H1 (cell line): ENCODE measurements at regions of chr19 and their contacts with region 1.

Region 1: DNA sequence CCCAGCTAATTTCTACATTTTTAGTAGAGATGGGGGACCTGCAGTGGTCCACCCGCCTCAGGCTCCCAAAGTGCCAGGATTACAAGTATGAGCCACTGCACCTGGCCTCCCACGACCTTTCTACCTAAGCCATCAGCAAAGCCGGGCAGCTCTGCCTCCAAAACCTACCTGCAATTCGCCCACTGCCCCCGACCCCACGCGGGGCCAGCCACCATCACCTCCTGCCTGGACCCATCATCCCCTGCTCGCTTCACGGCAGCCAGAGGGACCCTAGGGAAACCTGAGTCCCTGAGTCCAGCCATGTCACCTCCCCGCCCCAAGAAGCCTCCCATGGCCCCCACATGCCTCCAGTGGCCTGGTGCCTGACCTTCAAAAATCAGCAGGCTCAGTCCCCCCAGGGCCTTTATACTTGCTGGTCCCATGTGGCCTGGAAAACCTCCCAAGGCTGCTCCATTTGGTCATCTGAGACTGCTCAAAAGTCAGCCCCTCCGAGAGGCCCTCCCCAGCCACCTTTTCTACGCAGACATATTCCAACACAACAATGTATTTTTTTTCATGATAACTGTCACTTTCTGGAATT is 12.1 kb downstream of the ERCC2 start:
- DNase-seq: no peak
- H3K4me3 ChIP-seq: no peak overlapping the region
- H3K27ac ChIP-seq: no peak overlapping the region
- H3K4me1 ChIP-seq: no peaks in the 10 kb centered on the region
- H3K27me3 ChIP-seq: no peaks in the 10 kb centered on the region
- CTCF ChIP-seq: no peak
- EP300 ChIP-seq: no peak
- POLR2A ChIP-seq: no peak
- RAD21 ChIP-seq: no peak

Region 2: GRCh38 chr19:45346449-45346848 is 11.9 kb before region 1 on chr19:
- CTCF ChIA-PET with region 1: interaction called, 5 read pairs
- POLR2A ChIA-PET with region 1: interaction called, 25 read pairs
- DNase-seq: no peak
- H3K4me3 ChIP-seq: no peak overlapping the region
- H3K27ac ChIP-seq: no peak overlapping the region
- H3K4me1 ChIP-seq: peaks cover 0 to 9% (median 5%) of the 10 kb centered on the region in 4 experiments; a peak in 2 of 7 replicates
- H3K27me3 ChIP-seq: peaks cover 1 to 9% (median 6%) of the 10 kb centered on the region in 4 experiments; a peak in 6 of 7 replicates
- CTCF ChIP-seq: peak in 2 of 3 experiments; percentile 24 to 36; a peak in 2 of 4 replicates
- EP300 ChIP-seq: no peak
- POLR2A ChIP-seq: no peak
- RAD21 ChIP-seq: peak; percentile 8 to 28; a peak in 3 of 4 replicates